Prostate gland (tissue), 2 donors: ENCODE measurements at regions of chr9 and their contacts with region 1.

Region 1: DNA sequence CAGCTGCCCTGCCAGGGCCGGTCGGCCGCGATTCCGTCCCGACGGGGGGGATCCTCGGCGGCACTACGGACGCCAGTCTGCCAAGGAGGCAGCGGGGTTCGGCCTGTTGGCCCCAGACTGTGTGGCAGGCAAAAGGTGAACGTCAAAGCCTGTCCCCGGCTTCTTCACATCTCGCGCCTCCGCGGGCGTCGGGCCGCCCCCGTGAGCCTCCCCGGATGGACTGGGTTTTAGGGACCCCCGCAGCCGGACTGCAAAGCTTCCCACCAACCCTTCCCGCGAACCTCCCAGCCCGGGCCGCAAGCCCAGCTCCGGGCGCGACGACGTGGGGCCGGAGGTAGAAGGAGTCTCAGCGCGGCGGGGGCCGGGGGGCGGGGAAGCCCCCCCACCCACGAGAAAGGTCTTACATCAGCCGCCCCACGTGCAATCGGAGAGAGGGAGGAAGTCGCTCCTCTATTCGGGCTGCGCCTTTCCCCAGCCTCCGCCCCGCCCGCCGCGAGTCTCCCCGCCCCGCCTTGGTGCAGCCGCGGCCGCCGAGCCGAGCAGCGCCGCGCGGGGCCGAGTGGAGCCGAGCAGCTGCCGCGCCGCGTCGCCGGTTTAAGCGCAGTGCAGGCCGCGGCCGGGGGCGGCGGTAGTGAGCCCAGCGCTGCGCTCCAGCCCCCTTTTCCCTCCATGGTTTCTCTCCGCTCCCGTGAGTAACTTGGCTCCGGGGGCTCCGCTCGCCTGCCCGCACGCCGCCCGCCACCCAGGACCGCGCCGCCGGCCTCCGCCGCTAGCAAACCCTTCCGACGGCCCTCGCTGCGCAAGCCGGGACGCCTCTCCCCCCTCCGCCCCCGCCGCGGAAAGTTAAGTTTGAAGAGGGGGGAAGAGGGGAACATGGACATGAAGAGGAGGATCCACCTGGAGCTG is at the start of gene ANP32B:
- DNase-seq: peak; percentile 85
- H3K4me3 ChIP-seq: peak within 1 kb of the TSS; percentile 95 to 97
- H3K27ac ChIP-seq: peak within 1 kb of the TSS; percentile 97 to 99
- H3K4me1 ChIP-seq: peaks cover 9% of the 10 kb centered on the region
- H3K27me3 ChIP-seq: no peaks in the 10 kb centered on the region
- CTCF ChIP-seq: peak; percentile 85 to 97 (median 90)
- POLR2A ChIP-seq: peak; percentile 35
- total RNA-seq, gene ANP32B: 22.5 to 25.1 TPM

Region 2: DNA sequence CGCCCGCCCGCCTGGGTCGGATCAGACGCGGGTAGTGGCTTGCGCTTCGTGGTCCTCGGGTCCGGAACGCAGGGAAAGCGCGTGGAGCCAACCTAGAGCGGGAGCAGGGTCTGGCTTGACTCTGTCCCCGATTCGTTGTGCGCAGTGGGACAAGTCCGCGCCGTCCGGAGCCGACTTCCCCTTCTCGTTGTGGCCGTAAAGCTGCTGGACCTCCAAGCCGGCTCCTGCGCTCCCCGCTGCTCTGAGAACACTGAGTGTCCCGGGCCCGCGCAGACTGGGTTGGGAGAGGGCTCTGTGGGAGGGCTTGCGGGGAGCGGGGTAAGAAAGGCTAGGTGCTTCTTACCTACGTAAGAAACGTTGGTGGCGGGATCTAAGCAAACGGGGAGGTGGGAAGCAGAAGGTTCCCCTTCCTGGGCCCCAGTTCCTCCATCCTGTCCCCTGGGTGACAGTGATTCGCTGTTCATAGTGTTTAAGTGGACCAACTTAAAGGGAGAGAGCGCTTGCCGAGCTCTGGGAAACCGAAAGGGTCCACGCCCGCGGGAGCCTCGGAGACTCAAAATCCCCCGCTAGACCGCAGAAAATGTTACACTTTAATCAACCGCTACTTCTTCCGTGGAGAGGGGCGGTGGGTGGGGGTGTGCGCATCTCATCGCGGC is 134.2 kb before region 1 on chr9:
- intact Hi-C with region 1: no loop called
- DNase-seq: no peak
- H3K4me3 ChIP-seq: no peak overlapping the region
- H3K27ac ChIP-seq: no peak overlapping the region
- H3K4me1 ChIP-seq: peaks cover 8% of the 10 kb centered on the region
- H3K27me3 ChIP-seq: peaks cover 53% of the 10 kb centered on the region
- CTCF ChIP-seq: no peak
- POLR2A ChIP-seq: no peak

Region 3: DNA sequence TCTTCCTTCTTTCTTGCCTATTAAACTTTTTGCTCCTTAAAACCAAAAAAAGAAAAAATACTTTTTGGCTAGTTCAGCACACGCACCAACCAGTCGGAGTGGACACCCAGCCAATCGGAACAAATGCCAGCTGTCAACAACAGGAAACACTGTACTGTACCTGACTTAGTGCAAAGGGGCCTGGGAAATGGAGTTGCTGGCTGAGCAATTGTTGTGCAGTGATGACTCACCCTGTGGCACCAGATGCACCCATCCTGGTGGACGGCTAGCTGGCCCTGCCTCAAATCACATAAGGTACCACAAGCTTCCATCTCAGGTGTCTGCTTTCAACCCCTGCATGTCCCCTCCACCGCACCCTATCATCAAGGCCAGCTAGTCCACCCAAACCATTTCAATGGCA is 109.1 kb before region 1 on chr9:
- intact Hi-C with region 1: no loop called
- DNase-seq: no peak
- H3K4me3 ChIP-seq: no peak overlapping the region
- H3K27ac ChIP-seq: no peak overlapping the region
- H3K4me1 ChIP-seq: no peaks in the 10 kb centered on the region
- H3K27me3 ChIP-seq: no peaks in the 10 kb centered on the region
- CTCF ChIP-seq: no peak
- POLR2A ChIP-seq: no peak

Region 4: DNA sequence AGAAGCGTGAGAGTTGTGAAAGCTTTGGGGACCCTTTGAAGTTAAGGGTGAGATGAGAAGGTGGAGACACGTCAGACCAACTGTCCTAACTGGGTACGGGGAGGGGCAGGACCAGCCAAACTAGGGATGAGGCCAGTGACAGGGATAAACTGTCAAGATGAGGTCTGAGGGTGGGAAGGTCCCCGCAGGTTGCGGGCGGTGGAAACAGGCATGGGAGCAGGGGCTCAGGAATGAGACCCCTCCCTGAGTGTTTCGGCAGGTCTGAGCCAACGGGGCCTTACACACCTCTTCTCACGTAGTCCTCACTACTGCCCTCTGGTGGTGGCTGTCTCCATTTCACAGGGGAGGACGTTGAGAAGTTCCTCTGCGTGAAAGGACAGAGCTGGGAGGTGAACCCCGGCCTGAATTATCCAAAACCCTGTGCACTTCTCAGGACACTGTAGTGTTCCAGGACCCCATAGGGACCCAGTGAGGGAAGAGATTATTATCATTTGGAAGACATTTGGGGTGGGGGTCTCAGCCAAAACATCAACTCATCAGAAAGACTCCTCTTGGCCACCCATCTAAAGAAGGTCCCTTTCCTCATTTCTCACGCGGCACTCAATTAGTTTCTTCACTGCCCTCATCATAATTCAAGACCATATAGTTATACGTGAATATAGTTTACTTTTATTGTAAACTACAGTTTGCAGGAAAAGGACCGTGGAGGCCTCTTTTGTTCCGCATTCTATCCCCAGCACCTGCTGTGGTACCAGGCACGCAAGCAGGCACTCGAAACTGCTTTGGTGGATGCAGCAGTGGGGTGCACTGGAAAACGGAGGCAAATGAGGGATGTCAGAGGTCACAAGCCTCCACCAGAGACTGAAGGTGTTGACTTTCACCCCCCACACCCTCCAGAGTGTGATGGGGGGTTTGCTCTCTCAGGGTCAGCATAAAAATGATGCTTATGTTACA is 51.9 kb after region 1 on chr9:
- intact Hi-C with region 1: loop called (anchors 5 kb)
- DNase-seq: peak; percentile 80
- H3K4me3 ChIP-seq: no peak overlapping the region
- H3K27ac ChIP-seq: no peak overlapping the region
- H3K4me1 ChIP-seq: no peaks in the 10 kb centered on the region
- H3K27me3 ChIP-seq: no peaks in the 10 kb centered on the region
- CTCF ChIP-seq: peak; percentile 67 to 84 (median 77)
- POLR2A ChIP-seq: no peak